Vagina (tissue), 2 donors: ENCODE measurements at regions of chr1 and their contacts with region 1.

Region 1: GRCh38 chr1:158117854-158118704 is 62.6 kb upstream of the CD1D start:
- DNase-seq: no peak
- H3K4me3 ChIP-seq: peak overlapping the region; percentile 30
- H3K27ac ChIP-seq: no peak overlapping the region
- H3K4me1 ChIP-seq: peaks cover 10% of the 10 kb centered on the region
- H3K27me3 ChIP-seq: no peaks in the 10 kb centered on the region
- CTCF ChIP-seq: peak; percentile 14 to 34 (median 29)
- POLR2A ChIP-seq: no peak

Region 2: GRCh38 chr1:157969697-157970485 is 148.2 kb before region 1 on chr1:
- intact Hi-C with region 1: loop called (anchors 5 kb)
- DNase-seq: no peak
- H3K4me3 ChIP-seq: no peak overlapping the region
- H3K27ac ChIP-seq: no peak overlapping the region
- H3K4me1 ChIP-seq: peaks cover 14% of the 10 kb centered on the region
- H3K27me3 ChIP-seq: no peaks in the 10 kb centered on the region
- CTCF ChIP-seq: peak; percentile 25 to 47 (median 46)
- POLR2A ChIP-seq: no peak

Region 3: DNA sequence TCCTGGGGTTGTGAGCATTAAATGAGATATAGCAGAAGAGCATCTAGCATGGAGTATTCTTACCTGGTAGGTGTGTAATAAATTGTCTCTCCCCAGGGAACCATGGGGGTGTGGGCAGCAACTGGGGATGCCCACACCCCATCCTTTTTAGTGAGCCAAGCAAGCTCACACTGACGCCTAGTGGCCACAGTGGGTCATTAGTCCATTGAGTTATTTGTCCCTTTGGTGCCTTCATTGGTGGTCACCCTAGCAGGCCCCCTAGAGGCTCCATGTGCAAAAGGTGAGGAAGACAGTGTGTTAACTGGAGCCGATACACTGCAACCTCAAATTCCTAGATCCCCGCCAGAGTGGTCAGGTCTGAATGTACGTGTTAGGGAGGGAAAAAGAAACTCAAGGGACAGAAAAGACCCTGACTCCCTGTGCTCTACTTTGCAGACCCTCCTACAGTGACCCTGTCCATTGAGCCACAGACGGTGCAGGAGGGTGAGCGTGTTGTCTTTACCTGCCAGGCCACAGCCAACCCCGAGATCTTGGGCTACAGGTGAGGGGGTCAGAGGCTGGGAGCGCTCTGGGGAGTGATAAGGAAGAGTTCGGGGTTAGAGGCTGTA is 30.7 kb before region 1 on chr1:
- intact Hi-C with region 1: loop called (anchors 2 kb)
- DNase-seq: no peak
- H3K4me3 ChIP-seq: no peak overlapping the region
- H3K27ac ChIP-seq: no peak overlapping the region
- H3K4me1 ChIP-seq: no peaks in the 10 kb centered on the region
- H3K27me3 ChIP-seq: no peaks in the 10 kb centered on the region
- CTCF ChIP-seq: peak; percentile 49 to 76 (median 71)
- POLR2A ChIP-seq: no peak

Region 4: GRCh38 chr1:158248118-158248517 is 130.0 kb after region 1 on chr1:
- intact Hi-C with region 1: no loop called
- DNase-seq: no peak
- H3K4me3 ChIP-seq: no peak overlapping the region
- H3K27ac ChIP-seq: no peak overlapping the region
- H3K4me1 ChIP-seq: no peaks in the 10 kb centered on the region
- H3K27me3 ChIP-seq: no peaks in the 10 kb centered on the region
- CTCF ChIP-seq: no peak
- POLR2A ChIP-seq: no peak